WTC11 (cell line): ENCODE measurements at regions of chr6 and their contacts with region 1.

Region 1: DNA sequence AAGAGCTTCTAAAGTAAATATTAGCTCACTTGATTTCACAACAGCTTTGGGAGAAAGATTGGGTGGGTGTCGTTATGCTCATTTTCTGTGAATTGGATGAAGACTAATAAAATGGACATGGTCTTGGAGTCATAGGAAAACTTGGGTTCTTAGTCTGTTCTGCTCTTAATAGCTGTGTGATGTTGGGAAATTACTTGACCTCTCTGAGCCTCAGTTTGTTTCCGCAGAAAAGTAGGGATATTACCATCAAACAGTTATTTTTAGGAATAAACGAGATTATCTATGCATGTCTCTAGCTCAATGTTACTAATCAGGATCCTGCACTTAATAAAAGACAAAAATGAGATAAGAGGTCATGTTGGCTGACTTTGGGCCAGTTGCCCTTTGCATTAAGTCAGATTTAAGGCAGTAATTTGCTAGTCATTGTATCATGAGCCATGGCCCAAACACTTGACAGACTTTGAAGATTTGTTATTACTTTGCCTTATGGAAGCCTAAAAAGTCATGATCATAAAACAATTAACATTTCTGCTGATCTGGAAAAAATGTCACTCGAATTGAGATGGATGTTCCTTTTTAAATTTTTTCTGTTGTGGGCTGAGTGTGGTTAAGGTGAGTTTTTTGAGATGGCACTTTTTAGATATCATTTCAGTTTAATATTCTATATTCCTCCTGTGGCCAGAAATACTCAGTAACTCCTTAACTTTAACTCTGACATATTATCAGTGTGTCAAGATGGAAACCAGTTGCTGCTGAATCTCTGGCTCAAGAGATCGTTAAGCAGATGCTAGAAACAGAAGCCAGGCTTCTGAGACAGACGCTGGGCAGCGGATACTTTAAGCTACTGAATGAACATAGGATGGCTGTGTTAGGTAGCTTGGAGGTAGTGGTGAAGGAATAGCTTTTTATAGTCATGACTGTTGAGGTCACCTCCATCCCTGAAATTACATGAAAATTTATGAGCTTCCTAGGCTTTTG is 291.6 kb downstream of the PHF3 start:
- DNase-seq: no peak
- ATAC-seq: no peak
- H3K4me3 Mint-ChIP-seq: no peak overlapping the region
- H3K27ac Mint-ChIP-seq: no peak overlapping the region
- H3K4me1 Mint-ChIP-seq: no peaks in the 10 kb centered on the region
- H3K27me3 Mint-ChIP-seq: no peaks in the 10 kb centered on the region
- CTCF ChIP-seq: no peak

Region 2: GRCh38 chr6:63904650-63905248 is 22.5 kb before region 1 on chr6:
- CTCF ChIA-PET with region 1: no interaction called
- POLR2A ChIA-PET with region 1: no interaction called
- DNase-seq: no peak
- ATAC-seq: no peak
- H3K4me3 Mint-ChIP-seq: no peak overlapping the region
- H3K27ac Mint-ChIP-seq: no peak overlapping the region
- H3K4me1 Mint-ChIP-seq: no peaks in the 10 kb centered on the region
- H3K27me3 Mint-ChIP-seq: peaks cover 3% of the 10 kb centered on the region; the same call in 1 of the 2 replicates
- CTCF ChIP-seq: no peak

Region 3: DNA sequence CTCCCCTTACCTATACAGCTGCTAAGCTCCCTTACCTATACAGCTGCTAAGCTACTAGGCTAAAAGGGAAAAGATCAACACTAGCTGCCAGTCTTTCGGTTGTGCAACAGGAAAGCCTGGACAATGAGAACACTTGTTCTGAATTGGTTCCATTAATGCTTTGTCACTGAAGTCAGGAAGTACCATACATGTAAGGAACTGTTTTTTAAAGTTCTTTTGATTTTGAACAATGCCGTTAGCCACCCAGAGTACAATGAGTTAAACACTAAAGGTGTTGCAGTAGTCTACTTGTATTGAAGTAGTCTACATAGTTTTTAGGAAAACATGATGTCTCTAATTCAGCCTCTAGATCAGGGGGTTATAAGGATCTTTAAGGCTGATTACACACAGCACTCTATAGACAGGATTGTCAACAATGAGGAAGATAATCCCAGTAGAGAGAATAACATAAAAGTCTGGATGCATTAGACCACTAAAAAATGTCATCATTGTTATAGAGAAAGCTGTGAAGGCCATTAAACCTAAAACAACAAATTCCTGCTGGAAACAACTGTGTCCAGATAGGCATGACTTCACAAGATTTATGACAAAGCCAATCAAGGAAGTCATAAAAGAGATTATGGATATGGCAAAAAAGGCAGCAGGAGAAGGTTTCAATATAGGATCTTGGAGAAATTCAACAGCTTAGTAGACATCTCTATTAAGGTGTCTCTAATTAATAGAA is 14.7 kb after region 1 on chr6:
- CTCF ChIA-PET with region 1: interaction called, 3 read pairs
- POLR2A ChIA-PET with region 1: interaction called, 11 read pairs
- DNase-seq: no peak
- ATAC-seq: no peak
- H3K4me3 Mint-ChIP-seq: no peak overlapping the region
- H3K27ac Mint-ChIP-seq: no peak overlapping the region
- H3K4me1 Mint-ChIP-seq: peaks cover 13% of the 10 kb centered on the region
- H3K27me3 Mint-ChIP-seq: no peaks in the 10 kb centered on the region
- CTCF ChIP-seq: no peak